Panc1 (cell line): ENCODE measurements at regions of chr1 and their contacts with region 1.

Region 1: GRCh38 chr1:167791281-167792187 is 69.8 kb downstream of the MPZL1 start:
- DNase-seq: no peak
- ATAC-seq: no peak
- H3K4me3 ChIP-seq: no peak overlapping the region
- H3K27ac ChIP-seq: no peak overlapping the region
- H3K4me1 ChIP-seq: no peaks in the 10 kb centered on the region
- H3K27me3 ChIP-seq: no peaks in the 10 kb centered on the region
- CTCF ChIP-seq: no peak

Region 2: DNA sequence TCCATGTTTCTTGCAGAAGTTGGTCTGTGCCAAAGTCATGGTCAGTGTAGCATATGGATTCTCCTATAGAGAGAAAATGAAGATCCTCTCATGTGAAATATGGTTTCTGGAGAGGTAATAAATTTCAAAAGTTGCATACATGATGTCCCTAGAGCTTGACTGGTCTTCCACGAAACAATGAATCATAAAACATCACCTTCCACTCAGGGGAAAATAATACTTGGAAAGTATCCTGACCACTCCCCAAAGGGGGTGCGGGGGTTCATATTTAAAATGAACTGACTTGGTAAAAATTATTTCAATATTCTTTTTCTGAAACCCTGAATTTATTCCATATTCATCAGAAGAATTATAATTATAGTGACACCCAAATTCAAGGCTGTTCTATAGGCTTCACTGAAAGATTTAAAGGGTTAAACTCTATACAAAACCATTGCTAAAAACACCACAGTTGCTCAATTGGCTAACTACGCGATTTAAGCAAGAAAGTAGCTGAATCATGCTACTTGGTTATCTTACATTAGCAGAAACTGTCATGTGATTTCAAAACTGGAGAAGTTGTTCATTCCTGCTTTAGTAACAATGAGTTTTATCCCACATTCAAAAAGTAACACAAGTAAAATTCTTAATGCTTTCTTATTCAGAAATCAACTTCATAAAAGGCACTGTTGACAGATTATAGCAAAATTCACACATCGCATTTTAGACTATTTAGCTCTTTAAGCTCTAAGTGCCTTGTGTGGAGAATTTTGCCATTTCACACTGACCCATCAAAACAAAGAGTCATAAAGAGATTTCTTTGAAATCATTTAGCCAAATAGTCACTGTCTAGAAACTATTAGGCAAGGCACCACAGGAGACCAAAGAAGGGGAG is 243.2 kb before region 1 on chr1:
- CTCF ChIA-PET with region 1: no interaction called
- POLR2A ChIA-PET with region 1: no interaction called
- in situ Hi-C with region 1: no loop called
- intact Hi-C with region 1: no loop called
- DNase-seq: no peak
- ATAC-seq: no peak
- H3K4me3 ChIP-seq: no peak overlapping the region
- H3K27ac ChIP-seq: no peak overlapping the region
- H3K4me1 ChIP-seq: no peaks in the 10 kb centered on the region; the same call in 1 of the 2 replicates
- H3K27me3 ChIP-seq: no peaks in the 10 kb centered on the region
- CTCF ChIP-seq: no peak

Region 3: GRCh38 chr1:167957710-167958109 is 166.2 kb after region 1 on chr1:
- CTCF ChIA-PET with region 1: no interaction called
- POLR2A ChIA-PET with region 1: no interaction called
- in situ Hi-C with region 1: no loop called
- intact Hi-C with region 1: no loop called
- DNase-seq: no peak
- ATAC-seq: no peak
- H3K4me3 ChIP-seq: no peak overlapping the region
- H3K27ac ChIP-seq: no peak overlapping the region
- H3K4me1 ChIP-seq: no peaks in the 10 kb centered on the region
- H3K27me3 ChIP-seq: no peaks in the 10 kb centered on the region
- CTCF ChIP-seq: no peak

Region 4: DNA sequence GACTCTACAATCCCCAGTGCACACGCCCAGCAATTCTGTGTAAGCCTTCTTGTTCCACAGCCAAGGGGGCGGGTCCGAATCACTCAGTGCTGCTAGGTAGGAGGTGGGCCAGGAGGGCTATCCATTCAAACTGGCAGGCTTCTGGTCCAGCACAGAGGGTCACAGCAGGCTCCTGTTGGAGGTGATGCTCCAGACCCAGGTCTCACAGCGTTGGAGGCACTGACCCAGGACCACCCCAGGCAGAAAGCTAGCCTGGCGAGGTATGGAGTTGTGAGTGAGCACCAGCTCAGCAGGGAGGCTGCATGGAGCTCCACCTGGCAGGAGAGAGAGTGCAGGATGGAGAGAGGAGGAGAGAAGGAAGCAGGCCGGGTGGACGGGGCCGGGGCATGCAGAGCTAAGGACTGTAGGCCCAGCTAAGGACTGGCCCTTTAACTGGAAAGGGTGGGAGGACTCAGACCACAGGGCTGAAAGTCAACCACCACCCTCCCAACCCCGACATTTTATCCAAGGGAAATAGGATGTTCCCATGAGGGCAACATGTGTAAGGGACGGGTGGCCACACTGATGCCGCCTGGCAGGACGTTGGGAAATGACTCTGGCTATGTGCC is 306.5 kb after region 1 on chr1:
- CTCF ChIA-PET with region 1: no interaction called
- POLR2A ChIA-PET with region 1: no interaction called
- in situ Hi-C with region 1: no loop called
- intact Hi-C with region 1: no loop called
- DNase-seq: no peak
- ATAC-seq: no peak
- H3K4me3 ChIP-seq: no peak overlapping the region
- H3K27ac ChIP-seq: no peak overlapping the region
- H3K4me1 ChIP-seq: no peaks in the 10 kb centered on the region
- H3K27me3 ChIP-seq: peaks cover 3% of the 10 kb centered on the region; the same call in 1 of the 2 replicates
- CTCF ChIP-seq: no peak

Region 5: GRCh38 chr1:168187177-168187576 is 395.6 kb after region 1 on chr1:
- CTCF ChIA-PET with region 1: no interaction called
- POLR2A ChIA-PET with region 1: interaction called, 12 read pairs
- in situ Hi-C with region 1: no loop called
- intact Hi-C with region 1: no loop called
- DNase-seq: no peak
- ATAC-seq: no peak
- H3K4me3 ChIP-seq: no peak overlapping the region
- H3K27ac ChIP-seq: no peak overlapping the region
- H3K4me1 ChIP-seq: no peaks in the 10 kb centered on the region
- H3K27me3 ChIP-seq: no peaks in the 10 kb centered on the region
- CTCF ChIP-seq: no peak